Dendritic cell treated with granulocyte-macrophage colony-stimulating factor and Interleukin-4, amounts not matched to agents 40 ng/mL and 50 ng/mL, for 4 days (primary cell): ENCODE measurements at regions of chr11 and their contacts with region 1.

Region 1: GRCh38 chr11:10975287-10975721 is 117.5 kb upstream of the ZBED5 start:
- H3K4me3 Mint-ChIP-seq: no peak overlapping the region
- H3K27ac Mint-ChIP-seq: peak overlapping the region; percentile 85
- H3K4me1 Mint-ChIP-seq: peaks cover 84% of the 10 kb centered on the region
- H3K27me3 Mint-ChIP-seq: no peaks in the 10 kb centered on the region

Region 2: GRCh38 chr11:10943968-10944367 is 31.3 kb before region 1 on chr11:
- intact Hi-C with region 1: no loop called
- H3K4me3 Mint-ChIP-seq: no peak overlapping the region
- H3K27ac Mint-ChIP-seq: no peak overlapping the region
- H3K4me1 Mint-ChIP-seq: peaks cover 13% of the 10 kb centered on the region
- H3K27me3 Mint-ChIP-seq: peaks cover 6% of the 10 kb centered on the region

Region 3: DNA sequence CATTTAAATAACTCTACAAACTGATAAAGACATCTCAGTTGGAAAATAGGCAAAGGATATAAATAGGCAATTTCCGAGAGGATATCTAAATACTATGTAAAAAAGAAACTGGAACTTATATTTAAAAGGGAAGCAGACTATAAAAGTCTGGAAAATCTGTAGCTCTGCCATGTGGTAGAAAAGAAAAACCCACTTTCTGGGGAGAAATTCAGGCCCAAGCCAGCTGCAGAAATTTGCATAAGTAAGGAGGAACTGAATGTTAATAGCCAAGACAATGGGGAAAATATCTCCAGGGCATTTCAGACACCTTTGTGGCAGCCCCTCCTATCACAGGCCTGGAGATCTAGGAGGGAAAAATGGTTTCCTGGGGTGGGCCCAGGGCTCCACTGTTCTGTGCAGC is 19.7 kb before region 1 on chr11:
- intact Hi-C with region 1: loop called (anchors 2 kb)
- H3K4me3 Mint-ChIP-seq: no peak overlapping the region
- H3K27ac Mint-ChIP-seq: peak overlapping the region; percentile 67
- H3K4me1 Mint-ChIP-seq: peaks cover 58% of the 10 kb centered on the region
- H3K27me3 Mint-ChIP-seq: peaks cover 6% of the 10 kb centered on the region

Region 4: DNA sequence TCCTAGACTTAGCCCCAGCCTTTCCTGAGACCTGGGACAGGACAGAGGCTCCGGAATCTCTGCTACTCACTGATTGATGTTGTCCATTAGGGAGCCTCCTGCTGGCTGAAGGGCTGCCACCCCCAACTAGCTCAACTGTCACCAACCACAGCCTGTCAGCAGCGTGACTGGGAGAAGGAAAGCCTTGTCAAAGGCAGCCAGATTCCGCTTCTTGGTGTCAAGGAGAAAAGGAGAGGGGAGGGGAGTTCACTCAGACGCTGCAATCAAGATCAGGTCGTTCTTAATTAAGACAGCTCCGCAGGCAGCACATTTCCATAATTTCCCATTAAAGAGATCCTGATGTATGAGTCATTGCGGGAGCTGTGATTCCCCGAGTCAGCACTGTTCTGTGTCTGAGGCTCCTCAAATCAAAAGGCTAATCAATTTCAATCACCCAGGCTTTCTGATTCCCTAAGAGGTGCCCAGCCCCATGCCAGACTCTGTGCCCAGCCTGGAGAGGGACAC is 35.4 kb after region 1 on chr11:
- intact Hi-C with region 1: loop called (anchors 5 kb)
- H3K4me3 Mint-ChIP-seq: no peak overlapping the region
- H3K27ac Mint-ChIP-seq: peak overlapping the region; percentile 61
- H3K4me1 Mint-ChIP-seq: peaks cover 41% of the 10 kb centered on the region
- H3K27me3 Mint-ChIP-seq: peaks cover 22% of the 10 kb centered on the region